Heart left ventricle (tissue), 16 donors: ENCODE measurements at regions of chr5 and their contacts with region 1.

Region 1: GRCh38 chr5:150167908-150168307 is 1.3 kb downstream of the CDX1 start:
- DNase-seq: no peak
- ATAC-seq: no peak
- H3K4me3 ChIP-seq: no peak overlapping the region
- H3K27ac ChIP-seq: no peak overlapping the region
- H3K4me1 ChIP-seq: peaks cover 0 to 39% (median 24%) of the 10 kb centered on the region in 12 donors
- H3K27me3 ChIP-seq: peaks cover 0 to 39% (median 6%) of the 10 kb centered on the region in 9 donors
- CTCF ChIP-seq: peak in 1 of 12 donors; percentile 12
- POLR2A ChIP-seq: no peak

Region 2: DNA sequence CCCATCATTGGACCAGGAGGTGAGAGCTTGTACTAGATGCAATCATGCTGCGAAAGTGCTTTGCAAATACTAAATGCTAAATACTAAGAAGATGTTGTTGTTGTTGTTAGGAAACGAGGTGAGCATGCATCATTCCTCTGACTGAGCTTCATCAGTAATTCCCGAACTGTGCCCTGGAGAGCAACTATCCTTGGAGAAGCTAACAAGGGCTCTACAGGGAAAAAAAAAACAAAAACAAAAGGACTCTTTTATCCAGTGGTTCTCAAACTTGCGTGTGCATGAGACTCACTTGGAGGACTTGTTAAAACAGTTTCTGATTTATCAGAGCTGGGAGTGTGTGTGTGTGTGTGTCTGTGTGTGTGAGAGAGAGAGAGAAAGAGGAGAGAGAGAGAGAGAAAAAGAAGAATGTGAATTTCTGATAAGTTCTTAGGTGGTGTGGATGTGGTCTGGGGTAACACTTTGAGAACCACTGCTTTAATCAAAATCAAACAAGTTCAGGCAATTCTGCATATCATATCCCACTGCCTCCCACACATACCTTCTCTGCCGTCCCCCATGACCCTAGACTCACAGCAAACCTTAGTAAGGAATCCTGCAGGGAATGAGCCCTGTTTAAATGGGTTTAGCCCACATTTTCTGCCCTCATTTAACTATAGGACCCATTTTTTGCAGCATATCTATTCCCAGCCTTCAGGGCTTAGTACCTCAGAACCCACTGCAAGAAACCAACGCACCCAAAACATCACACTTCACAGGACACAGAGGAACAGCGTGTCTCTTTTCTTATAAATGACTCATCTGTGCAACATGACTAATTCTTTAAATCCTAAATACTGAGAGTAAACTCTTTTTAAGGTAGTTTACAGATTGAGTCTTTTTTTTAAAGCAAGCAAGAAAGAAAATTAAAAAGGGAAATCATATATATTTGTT is 272.2 kb before region 1 on chr5:
- intact Hi-C with region 1: no loop called
- DNase-seq: no peak
- ATAC-seq: no peak
- H3K4me3 ChIP-seq: no peak overlapping the region
- H3K27ac ChIP-seq: no peak overlapping the region
- H3K4me1 ChIP-seq: no peaks in the 10 kb centered on the region
- H3K27me3 ChIP-seq: no peaks in the 10 kb centered on the region
- CTCF ChIP-seq: no peak
- POLR2A ChIP-seq: no peak

Region 3: DNA sequence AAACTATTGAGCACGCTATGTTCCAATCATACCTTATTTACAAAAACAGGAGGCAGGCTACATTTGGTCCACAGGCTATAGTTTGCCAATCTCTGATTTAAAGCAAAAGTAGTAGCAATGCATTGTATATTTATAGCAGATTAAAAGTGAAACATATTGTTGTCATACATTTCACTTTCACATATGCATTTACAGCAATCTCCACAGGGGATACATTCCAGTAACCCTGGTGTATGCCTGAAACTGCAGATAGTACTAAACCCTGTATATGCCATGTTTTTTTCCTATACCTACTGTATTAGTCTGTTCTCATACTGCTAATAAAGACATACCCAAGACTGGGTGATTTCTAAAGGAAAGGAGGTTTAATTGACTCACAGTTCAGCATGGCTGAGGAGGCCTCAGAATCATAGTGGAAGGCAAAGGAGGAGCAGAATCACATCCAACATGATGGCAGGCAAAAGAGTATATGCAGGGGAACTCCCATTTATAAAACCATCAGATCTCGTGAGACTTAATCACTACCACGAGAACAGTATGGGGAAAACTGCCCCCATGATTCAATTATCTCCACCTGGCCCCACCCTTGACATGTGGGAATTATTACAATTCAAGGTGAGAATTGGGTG is 75.6 kb before region 1 on chr5:
- intact Hi-C with region 1: no loop called
- DNase-seq: no peak
- ATAC-seq: no peak
- H3K4me3 ChIP-seq: no peak overlapping the region
- H3K27ac ChIP-seq: no peak overlapping the region
- H3K4me1 ChIP-seq: peaks cover 0 to 10% (median 0%) of the 10 kb centered on the region in 12 donors
- H3K27me3 ChIP-seq: peaks cover 0 to 1% (median 0%) of the 10 kb centered on the region in 9 donors
- CTCF ChIP-seq: no peak
- POLR2A ChIP-seq: no peak

Region 4: GRCh38 chr5:150203832-150204589 is 36.1 kb after region 1 on chr5:
- intact Hi-C with region 1: loop called in 1 of 10 experiments (anchors 5 kb)
- DNase-seq: no peak
- ATAC-seq: no peak
- H3K4me3 ChIP-seq: no peak overlapping the region
- H3K27ac ChIP-seq: no peak overlapping the region
- H3K4me1 ChIP-seq: peaks cover 0 to 5% (median 0%) of the 10 kb centered on the region in 12 donors
- H3K27me3 ChIP-seq: peaks cover 0 to 6% (median 0%) of the 10 kb centered on the region in 9 donors
- CTCF ChIP-seq: no peak
- POLR2A ChIP-seq: no peak